ENCODE measurements at regions of chr5 and their contacts with region 1.

Region 1: DNA sequence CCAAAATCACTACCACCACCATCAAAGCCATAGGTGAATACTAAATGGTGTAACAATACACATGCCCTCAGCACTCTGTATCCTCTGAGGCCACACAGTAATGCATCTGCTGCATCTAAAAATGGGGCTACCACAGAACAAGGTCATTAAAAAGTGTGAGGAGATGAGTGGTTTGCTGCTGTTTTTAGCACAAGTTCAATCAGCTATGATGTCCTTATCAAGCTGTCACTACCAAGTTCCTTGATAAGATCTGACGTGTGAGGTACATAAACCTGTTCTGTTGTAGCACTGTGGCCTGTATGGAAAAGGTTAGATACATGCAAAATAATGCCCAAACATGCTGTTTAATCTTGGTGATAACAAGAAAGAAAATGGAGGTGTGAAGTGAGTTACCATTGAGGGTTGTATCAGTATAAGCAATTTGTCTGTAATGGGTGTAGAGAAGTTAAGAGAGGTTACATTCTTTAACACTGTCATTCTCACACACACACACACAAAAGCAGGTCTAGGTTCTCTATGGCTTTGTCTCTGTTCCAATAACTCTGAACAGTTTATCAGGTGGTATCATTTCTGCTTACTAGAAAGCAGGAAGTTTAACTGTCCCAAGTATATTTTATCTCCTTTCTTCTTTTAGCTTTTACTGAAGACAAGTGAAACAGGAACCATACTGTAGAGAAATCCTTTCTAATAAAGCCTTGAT is 252.9 kb downstream of the CWC27 start:
- DNase-seq: no peak
- H3K4me3 Mint-ChIP-seq: no peak overlapping the region
- H3K27ac Mint-ChIP-seq: peak overlapping the region; percentile 53
- H3K4me1 Mint-ChIP-seq: peaks cover 47% of the 10 kb centered on the region
- H3K27me3 Mint-ChIP-seq: no peaks in the 10 kb centered on the region

Region 2: GRCh38 chr5:64746446-64746845 is 275.2 kb before region 1 on chr5:
- intact Hi-C with region 1: no loop called
- DNase-seq: no peak
- H3K4me3 Mint-ChIP-seq: no peak overlapping the region
- H3K27ac Mint-ChIP-seq: no peak overlapping the region
- H3K4me1 Mint-ChIP-seq: peaks cover 8% of the 10 kb centered on the region
- H3K27me3 Mint-ChIP-seq: no peaks in the 10 kb centered on the region

Region 3: GRCh38 chr5:65035211-65036206 is 13.8 kb after region 1 on chr5:
- intact Hi-C with region 1: loop called (anchors 2 kb)
- DNase-seq: peak; percentile 79
- H3K4me3 Mint-ChIP-seq: peak overlapping the region; percentile 78
- H3K27ac Mint-ChIP-seq: peak overlapping the region; percentile 83
- H3K4me1 Mint-ChIP-seq: peaks cover 34% of the 10 kb centered on the region
- H3K27me3 Mint-ChIP-seq: no peaks in the 10 kb centered on the region

Measured in activated T-helper 2 cell treated with anti-CD3 and anti-CD28 coated beads, Interferon-gamma antibody, Interleukin-2, Interleukin-4, amounts not matched to agents 10 μg/mL and 5 μg/mL and 100 μg/mL, durations not matched to agents 14 hours and 24 hours and 36 hours (primary cell).